ENCODE measurements at regions of chrX and their contacts with region 1.

Region 1: DNA sequence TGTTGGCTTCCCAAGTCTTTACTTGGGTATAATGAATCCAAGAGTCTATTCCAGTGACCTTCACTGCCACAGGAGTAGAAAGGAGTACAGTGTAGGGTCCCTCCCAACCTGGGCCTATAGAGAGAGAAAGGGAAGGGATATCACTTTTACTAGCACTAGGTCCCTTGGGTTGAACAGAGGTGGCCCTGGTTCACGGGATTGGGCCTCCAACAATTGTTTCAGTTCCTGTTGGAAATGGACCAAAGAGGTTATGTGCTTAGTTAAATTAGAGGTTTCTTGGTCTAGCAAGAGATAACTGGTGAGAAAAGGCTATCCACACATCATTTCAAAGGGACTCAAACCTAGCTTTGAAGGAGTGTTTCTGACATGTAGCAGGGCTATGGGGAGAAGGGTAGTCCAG is 57.1 kb upstream of the MED14 start:
- DNase-seq: no peak
- ATAC-seq: no peak
- H3K4me3 ChIP-seq: no peak overlapping the region
- H3K4me3 Mint-ChIP-seq: no peak overlapping the region
- H3K27ac ChIP-seq: no peak overlapping the region
- H3K27ac Mint-ChIP-seq: no peak overlapping the region
- H3K4me1 ChIP-seq: peaks cover 0 to 4% of the 10 kb centered on the region in 2 donors
- H3K4me1 Mint-ChIP-seq: peaks cover 2% of the 10 kb centered on the region
- H3K27me3 ChIP-seq: no peaks in the 10 kb centered on the region
- H3K27me3 Mint-ChIP-seq: no peaks in the 10 kb centered on the region
- CTCF ChIP-seq: no peak

Region 2: GRCh38 chrX:40392599-40392998 is 399.8 kb before region 1 on chrX:
- CTCF ChIA-PET with region 1: no interaction called
- POLR2A ChIA-PET with region 1: no interaction called
- intact Hi-C with region 1: no loop called
- DNase-seq: no peak
- ATAC-seq: no peak
- H3K4me3 ChIP-seq: no peak overlapping the region
- H3K4me3 Mint-ChIP-seq: no peak overlapping the region
- H3K27ac ChIP-seq: no peak overlapping the region
- H3K27ac Mint-ChIP-seq: no peak overlapping the region
- H3K4me1 ChIP-seq: no peaks in the 10 kb centered on the region
- H3K4me1 Mint-ChIP-seq: no peaks in the 10 kb centered on the region
- H3K27me3 ChIP-seq: no peaks in the 10 kb centered on the region
- H3K27me3 Mint-ChIP-seq: no peaks in the 10 kb centered on the region
- CTCF ChIP-seq: no peak

Region 3: GRCh38 chrX:40543661-40544328 is 248.6 kb before region 1 on chrX:
- CTCF ChIA-PET with region 1: interaction called, 15 read pairs
- POLR2A ChIA-PET with region 1: no interaction called
- intact Hi-C with region 1: no loop called
- DNase-seq: peak; percentile 60
- ATAC-seq: peak; percentile 51
- H3K4me3 ChIP-seq: no peak overlapping the region
- H3K4me3 Mint-ChIP-seq: no peak overlapping the region
- H3K27ac ChIP-seq: no peak overlapping the region
- H3K27ac Mint-ChIP-seq: no peak overlapping the region
- H3K4me1 ChIP-seq: peaks cover 0 to 15% of the 10 kb centered on the region in 2 donors
- H3K4me1 Mint-ChIP-seq: peaks cover 15% of the 10 kb centered on the region
- H3K27me3 ChIP-seq: no peaks in the 10 kb centered on the region
- H3K27me3 Mint-ChIP-seq: no peaks in the 10 kb centered on the region
- CTCF ChIP-seq: peak; percentile 76

Region 4: GRCh38 chrX:40558590-40558989 is 233.8 kb before region 1 on chrX:
- CTCF ChIA-PET with region 1: no interaction called
- POLR2A ChIA-PET with region 1: no interaction called
- intact Hi-C with region 1: no loop called
- DNase-seq: no peak
- ATAC-seq: no peak
- H3K4me3 ChIP-seq: no peak overlapping the region
- H3K4me3 Mint-ChIP-seq: no peak overlapping the region
- H3K27ac ChIP-seq: no peak overlapping the region
- H3K27ac Mint-ChIP-seq: no peak overlapping the region
- H3K4me1 ChIP-seq: no peaks in the 10 kb centered on the region
- H3K4me1 Mint-ChIP-seq: no peaks in the 10 kb centered on the region
- H3K27me3 ChIP-seq: no peaks in the 10 kb centered on the region
- H3K27me3 Mint-ChIP-seq: no peaks in the 10 kb centered on the region
- CTCF ChIP-seq: no peak

Region 5: DNA sequence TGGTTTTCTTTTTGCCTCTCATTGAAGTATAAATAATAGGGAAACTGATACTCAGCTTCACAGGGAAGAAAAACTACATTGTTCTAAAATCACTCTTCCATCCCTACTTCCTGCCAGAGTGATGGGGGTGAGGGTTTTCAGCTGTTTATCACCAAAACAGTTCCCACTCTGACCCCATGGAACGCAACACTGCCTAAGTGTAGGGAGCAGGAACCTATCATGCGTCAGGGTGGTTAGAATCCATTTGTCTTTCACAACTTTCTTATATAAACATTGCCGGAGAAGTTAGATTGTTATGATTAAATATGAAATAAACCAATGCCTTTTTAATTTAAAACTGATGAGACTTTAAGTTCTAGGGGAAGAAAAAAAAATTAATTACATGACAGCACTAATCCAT is 185.1 kb before region 1 on chrX:
- CTCF ChIA-PET with region 1: no interaction called
- POLR2A ChIA-PET with region 1: no interaction called
- intact Hi-C with region 1: no loop called
- DNase-seq: no peak
- ATAC-seq: no peak
- H3K4me3 ChIP-seq: no peak overlapping the region
- H3K4me3 Mint-ChIP-seq: no peak overlapping the region
- H3K27ac ChIP-seq: no peak overlapping the region
- H3K27ac Mint-ChIP-seq: no peak overlapping the region
- H3K4me1 ChIP-seq: no peaks in the 10 kb centered on the region
- H3K4me1 Mint-ChIP-seq: no peaks in the 10 kb centered on the region
- H3K27me3 ChIP-seq: no peaks in the 10 kb centered on the region
- H3K27me3 Mint-ChIP-seq: no peaks in the 10 kb centered on the region
- CTCF ChIP-seq: no peak

Region 6: DNA sequence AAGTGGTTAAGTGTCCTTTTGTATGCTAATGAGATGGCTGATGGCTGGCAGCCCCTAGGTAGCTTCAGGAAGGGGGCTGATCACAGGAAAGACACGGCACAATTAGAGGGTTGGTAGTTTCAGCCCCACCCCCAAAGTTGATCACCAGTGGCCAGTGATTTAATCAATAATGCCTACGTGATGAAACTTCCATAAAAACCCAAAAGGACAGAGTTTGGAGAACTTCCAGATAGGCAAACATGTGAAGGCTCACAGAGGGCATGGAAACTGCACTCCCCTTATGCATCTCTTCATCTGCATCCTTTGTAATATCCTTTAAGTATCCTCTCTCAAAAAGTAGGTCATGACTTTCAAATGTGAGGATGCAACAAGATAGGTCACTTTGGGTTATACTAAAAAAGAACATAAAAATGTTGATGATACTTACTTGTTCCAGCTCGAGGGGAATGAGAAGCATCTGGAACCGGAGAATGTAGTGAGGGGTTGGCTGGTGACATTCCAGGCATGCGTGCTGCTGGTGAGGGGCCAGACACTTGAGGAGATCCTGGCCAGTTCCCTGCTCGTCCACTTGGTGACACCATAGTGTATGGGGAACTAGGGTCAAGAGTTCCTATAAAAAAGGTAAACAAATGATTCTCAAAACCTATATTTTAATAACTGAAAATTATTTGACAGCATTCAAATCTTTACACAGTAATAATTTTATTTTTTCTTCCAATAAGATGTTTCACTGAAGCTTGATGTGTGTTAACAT is 128.4 kb before region 1 on chrX:
- CTCF ChIA-PET with region 1: interaction called, 11 read pairs
- POLR2A ChIA-PET with region 1: no interaction called
- intact Hi-C with region 1: no loop called
- DNase-seq: no peak
- ATAC-seq: no peak
- H3K4me3 ChIP-seq: no peak overlapping the region
- H3K4me3 Mint-ChIP-seq: no peak overlapping the region
- H3K27ac ChIP-seq: no peak overlapping the region
- H3K27ac Mint-ChIP-seq: peak overlapping the region; percentile 50
- H3K4me1 ChIP-seq: no peaks in the 10 kb centered on the region
- H3K4me1 Mint-ChIP-seq: peaks cover 5% of the 10 kb centered on the region
- H3K27me3 ChIP-seq: no peaks in the 10 kb centered on the region
- H3K27me3 Mint-ChIP-seq: no peaks in the 10 kb centered on the region
- CTCF ChIP-seq: no peak

Region 7: GRCh38 chrX:41110801-41111625 is 318.6 kb after region 1 on chrX:
- CTCF ChIA-PET with region 1: interaction called, 5 read pairs
- POLR2A ChIA-PET with region 1: no interaction called
- intact Hi-C with region 1: loop called (anchors 2 kb)
- DNase-seq: no peak
- ATAC-seq: no peak
- H3K4me3 ChIP-seq: no peak overlapping the region
- H3K4me3 Mint-ChIP-seq: no peak overlapping the region
- H3K27ac ChIP-seq: peak overlapping the region in 1 of 2 donors; percentile 33
- H3K27ac Mint-ChIP-seq: peak overlapping the region; percentile 74
- H3K4me1 ChIP-seq: peaks cover 16 to 40% of the 10 kb centered on the region in 2 donors
- H3K4me1 Mint-ChIP-seq: peaks cover 60% of the 10 kb centered on the region
- H3K27me3 ChIP-seq: no peaks in the 10 kb centered on the region
- H3K27me3 Mint-ChIP-seq: no peaks in the 10 kb centered on the region
- CTCF ChIP-seq: no peak

Region 8: GRCh38 chrX:41705680-41706374 is 913.4 kb after region 1 on chrX:
- CTCF ChIA-PET with region 1: no interaction called
- POLR2A ChIA-PET with region 1: no interaction called
- intact Hi-C with region 1: no loop called
- DNase-seq: peak; percentile 48
- ATAC-seq: peak; percentile 76
- H3K4me3 ChIP-seq: peak overlapping the region in 2 of 5 experiments; percentile 8 to 11
- H3K4me3 Mint-ChIP-seq: peak overlapping the region; percentile 85
- H3K27ac ChIP-seq: peak overlapping the region; percentile 44 to 55
- H3K27ac Mint-ChIP-seq: peak overlapping the region; percentile 97
- H3K4me1 ChIP-seq: peaks cover 43 to 48% of the 10 kb centered on the region in 2 donors
- H3K4me1 Mint-ChIP-seq: peaks cover 52% of the 10 kb centered on the region
- H3K27me3 ChIP-seq: no peaks in the 10 kb centered on the region
- H3K27me3 Mint-ChIP-seq: no peaks in the 10 kb centered on the region
- CTCF ChIP-seq: no peak

Measured in B cell (primary cell).